CD8-positive, alpha-beta T cell (primary cell): ENCODE measurements at regions of chr2 and their contacts with region 1.

Region 1: DNA sequence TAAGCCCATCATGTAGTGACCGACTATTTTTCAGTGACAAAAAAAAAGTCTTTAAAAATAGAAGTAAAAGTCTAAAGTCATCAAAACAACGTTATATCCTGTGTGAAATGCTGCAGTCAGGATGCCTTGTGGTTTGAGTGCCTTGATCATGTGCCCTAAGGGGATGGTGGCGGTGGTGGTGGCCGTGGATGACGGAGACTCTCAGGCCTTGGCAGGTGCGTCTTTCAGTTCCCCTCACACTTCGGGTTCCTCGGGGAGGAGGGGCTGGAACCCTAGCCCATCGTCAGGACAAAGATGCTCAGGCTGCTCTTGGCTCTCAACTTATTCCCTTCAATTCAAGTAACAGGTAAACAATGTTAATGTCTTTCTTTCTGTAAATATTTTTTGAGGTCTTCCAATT is at the start of gene CD28:
- DNase-seq: peak; percentile 79 to 97 (median 89)
- ATAC-seq: peak; percentile 81
- H3K4me3 ChIP-seq: peak within 1 kb of the TSS; percentile 63 to 64
- H3K4me3 Mint-ChIP-seq: peak within 1 kb of the TSS; percentile 93
- H3K27ac ChIP-seq: peak within 1 kb of the TSS; percentile 82 to 83
- H3K27ac Mint-ChIP-seq: peak within 1 kb of the TSS; percentile 97
- H3K4me1 ChIP-seq: peaks cover 45% of the 10 kb centered on the region
- H3K4me1 Mint-ChIP-seq: peaks cover 53% of the 10 kb centered on the region
- H3K27me3 ChIP-seq: peaks cover 0 to 2% of the 10 kb centered on the region in 2 experiments
- H3K27me3 Mint-ChIP-seq: no peaks in the 10 kb centered on the region
- CTCF ChIP-seq: no peak
- total RNA-seq, gene CD28: 78.4 to 80.7 TPM

Region 2: GRCh38 chr2:203535078-203535783 is 171.2 kb before region 1 on chr2 and contains the start of gene RAPH1:
- CTCF ChIA-PET with region 1: interaction called, 3 read pairs
- POLR2A ChIA-PET with region 1: interaction called, 7 read pairs
- intact Hi-C with region 1: loop called in 1 of 2 experiments (anchors 5 kb)
- DNase-seq: peak; percentile 3 to 65 (median 54)
- ATAC-seq: peak; percentile 62
- H3K4me3 ChIP-seq: peak within 1 kb of the TSS; percentile 49 to 50
- H3K4me3 Mint-ChIP-seq: peak within 1 kb of the TSS; percentile 86
- H3K27ac ChIP-seq: no peak within 1 kb of the TSS
- H3K27ac Mint-ChIP-seq: no peak within 1 kb of the TSS
- H3K4me1 ChIP-seq: peaks cover 15% of the 10 kb centered on the region
- H3K4me1 Mint-ChIP-seq: peaks cover 27% of the 10 kb centered on the region
- H3K27me3 ChIP-seq: peaks cover 0 to 7% of the 10 kb centered on the region in 2 experiments
- H3K27me3 Mint-ChIP-seq: peaks cover 28% of the 10 kb centered on the region
- CTCF ChIP-seq: no peak
- total RNA-seq, gene RAPH1: 1.8 to 1.9 TPM

Region 3: GRCh38 chr2:203740780-203741281 is 34.4 kb after region 1 on chr2:
- CTCF ChIA-PET with region 1: interaction called, 6 read pairs
- POLR2A ChIA-PET with region 1: interaction called, 60 read pairs
- intact Hi-C with region 1: loop called (anchors 1 to 2 kb)
- DNase-seq: peak in 6 of 9 experiments; percentile 22 to 89 (median 48)
- ATAC-seq: peak; percentile 83
- H3K4me3 ChIP-seq: no peak overlapping the region
- H3K4me3 Mint-ChIP-seq: peak overlapping the region; percentile 70
- H3K27ac ChIP-seq: peak overlapping the region; percentile 63 to 77
- H3K27ac Mint-ChIP-seq: peak overlapping the region; percentile 95
- H3K4me1 ChIP-seq: peaks cover 67% of the 10 kb centered on the region
- H3K4me1 Mint-ChIP-seq: peaks cover 82% of the 10 kb centered on the region
- H3K27me3 ChIP-seq: no peaks in the 10 kb centered on the region
- H3K27me3 Mint-ChIP-seq: no peaks in the 10 kb centered on the region
- CTCF ChIP-seq: no peak

Region 4: DNA sequence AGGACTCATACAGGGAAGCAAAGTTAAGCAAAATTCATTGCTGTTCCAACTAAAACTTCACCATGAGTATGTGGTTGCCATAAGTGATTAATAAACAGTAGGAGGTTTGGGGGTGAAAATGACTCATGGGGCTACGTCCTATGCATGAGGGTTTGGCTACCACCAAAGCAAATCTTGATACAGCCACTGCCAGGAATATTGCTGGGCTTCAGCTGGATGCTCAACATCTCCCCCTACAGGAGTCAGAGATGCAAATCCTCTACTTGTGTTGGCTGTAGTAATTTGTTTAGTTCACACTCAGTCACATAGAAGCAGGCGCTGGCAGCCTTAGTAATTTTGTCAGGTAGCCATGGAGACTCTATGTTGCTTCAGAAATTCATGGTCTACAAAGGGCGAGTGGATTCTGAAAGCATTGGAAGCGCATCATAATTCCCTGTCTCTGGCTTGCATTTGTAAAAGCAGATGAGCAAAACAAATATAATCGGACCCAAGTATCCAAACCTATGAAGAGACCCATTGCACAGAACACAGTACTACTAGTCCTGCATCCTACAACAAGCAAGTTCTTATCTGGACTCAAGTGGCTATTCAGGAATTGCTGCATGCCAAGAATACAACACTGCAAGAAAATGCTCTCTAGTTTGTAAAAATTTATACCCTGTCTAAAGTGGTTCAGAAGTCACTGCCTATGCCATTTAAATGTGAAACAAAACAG is 76.0 kb after region 1 on chr2:
- CTCF ChIA-PET with region 1: interaction called, 4 read pairs
- POLR2A ChIA-PET with region 1: no interaction called
- intact Hi-C with region 1: loop called (anchors 1 to 5 kb)
- DNase-seq: peak; percentile 28 to 87 (median 63)
- ATAC-seq: peak; percentile 91
- H3K4me3 ChIP-seq: no peak overlapping the region
- H3K4me3 Mint-ChIP-seq: no peak overlapping the region
- H3K27ac ChIP-seq: no peak overlapping the region
- H3K27ac Mint-ChIP-seq: peak overlapping the region; percentile 87
- H3K4me1 ChIP-seq: peaks cover 24% of the 10 kb centered on the region
- H3K4me1 Mint-ChIP-seq: peaks cover 44% of the 10 kb centered on the region
- H3K27me3 ChIP-seq: no peaks in the 10 kb centered on the region
- H3K27me3 Mint-ChIP-seq: no peaks in the 10 kb centered on the region
- CTCF ChIP-seq: peak; percentile 69